ENCODE measurements at regions of chr7 and their contacts with region 1.

Region 1: GRCh38 chr7:50359995-50360925 is 55.7 kb downstream of the IKZF1 start:
- DNase-seq: peak; percentile 57
- H3K4me3 ChIP-seq: no peak overlapping the region
- H3K27ac ChIP-seq: no peak overlapping the region
- H3K4me1 ChIP-seq: peaks cover 0 to 11% of the 10 kb centered on the region in 2 experiments; a peak in 1 of 4 replicates
- H3K27me3 ChIP-seq: 0 out of 2 replicates have a peak, but pooled peaks cover 4% of the 10 kb centered on the region
- CTCF ChIP-seq: no peak
- EP300 ChIP-seq: no peak
- RAD21 ChIP-seq: no peak

Region 2: GRCh38 chr7:50346553-50347497 is 13.4 kb before region 1 on chr7:
- CTCF ChIA-PET with region 1: interaction called, 11 read pairs
- POLR2A ChIA-PET with region 1: no interaction called
- DNase-seq: no peak
- H3K4me3 ChIP-seq: no peak overlapping the region
- H3K27ac ChIP-seq: no peak overlapping the region
- H3K4me1 ChIP-seq: peaks cover 0 to 18% of the 10 kb centered on the region in 2 experiments; a peak in 2 of 4 replicates
- H3K27me3 ChIP-seq: peaks cover 6% of the 10 kb centered on the region
- CTCF ChIP-seq: no peak
- EP300 ChIP-seq: no peak
- RAD21 ChIP-seq: no peak

Region 3: DNA sequence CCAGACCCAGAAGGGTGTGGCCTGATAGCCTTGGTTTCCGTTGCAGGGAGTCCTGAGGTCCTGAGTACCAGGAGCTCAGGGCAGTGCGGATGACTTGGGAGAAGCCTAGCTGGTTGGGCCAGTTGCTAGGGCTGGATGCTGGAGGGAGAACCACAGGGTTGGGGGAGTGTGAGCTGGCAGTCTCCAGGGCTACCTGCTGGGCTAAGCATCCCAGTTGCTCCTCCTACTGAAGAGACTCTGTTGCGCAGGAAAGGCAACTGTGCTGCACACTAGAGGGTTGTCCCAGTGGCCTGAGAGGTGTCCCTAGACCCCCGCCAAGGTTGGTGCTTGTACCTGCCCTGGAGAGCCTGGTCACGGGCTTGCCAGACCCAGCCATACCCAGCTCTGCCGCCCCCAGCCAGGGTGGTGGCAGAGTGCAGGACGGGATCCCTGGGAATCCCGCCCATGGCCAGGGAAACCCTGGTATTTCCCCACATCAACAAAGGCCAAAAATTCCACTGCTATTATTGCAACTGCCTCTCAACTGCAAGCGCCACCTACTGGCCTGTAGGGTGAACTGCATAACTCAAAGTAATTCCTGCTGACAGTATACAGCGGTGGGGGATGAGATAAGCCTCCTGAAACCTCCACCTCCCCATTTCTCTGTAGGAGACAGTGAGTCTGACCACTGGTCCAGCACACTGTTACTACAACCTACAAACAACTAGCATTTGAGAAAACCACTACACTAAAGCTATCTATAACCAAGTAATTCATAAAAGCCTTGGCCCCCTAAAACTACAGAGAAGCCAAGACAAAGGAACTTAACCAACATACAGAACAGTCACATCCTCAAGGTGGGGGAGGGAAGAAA is 272.5 kb after region 1 on chr7:
- CTCF ChIA-PET with region 1: no interaction called
- POLR2A ChIA-PET with region 1: no interaction called
- DNase-seq: peak; percentile 74
- H3K4me3 ChIP-seq: no peak overlapping the region; a peak in 1 of 4 replicates
- H3K27ac ChIP-seq: no peak overlapping the region; a peak in 1 of 4 replicates
- H3K4me1 ChIP-seq: peaks cover 0 to 15% of the 10 kb centered on the region in 2 experiments; a peak in 1 of 4 replicates
- H3K27me3 ChIP-seq: no peaks in the 10 kb centered on the region
- CTCF ChIP-seq: peak; percentile 98
- EP300 ChIP-seq: no peak
- RAD21 ChIP-seq: peak; percentile 78

Measured in SK-N-SH (cell line).